ENCODE measurements at regions of chr2 and their contacts with region 1.

Region 1: GRCh38 chr2:148350199-148350598 is 294.4 kb upstream of the EPC2 start:
- DNase-seq: no peak

Region 2: GRCh38 chr2:148298196-148298595 is 52.0 kb before region 1 on chr2:
- intact Hi-C with region 1: loop called in 1 of 2 experiments (anchors 2 kb)
- DNase-seq: no peak

Measured in posterior vena cava (tissue), 2 donors.